Upper lobe of right lung (tissue), 1 donor: ENCODE measurements at regions of chr2 and their contacts with region 1.

Region 1: DNA sequence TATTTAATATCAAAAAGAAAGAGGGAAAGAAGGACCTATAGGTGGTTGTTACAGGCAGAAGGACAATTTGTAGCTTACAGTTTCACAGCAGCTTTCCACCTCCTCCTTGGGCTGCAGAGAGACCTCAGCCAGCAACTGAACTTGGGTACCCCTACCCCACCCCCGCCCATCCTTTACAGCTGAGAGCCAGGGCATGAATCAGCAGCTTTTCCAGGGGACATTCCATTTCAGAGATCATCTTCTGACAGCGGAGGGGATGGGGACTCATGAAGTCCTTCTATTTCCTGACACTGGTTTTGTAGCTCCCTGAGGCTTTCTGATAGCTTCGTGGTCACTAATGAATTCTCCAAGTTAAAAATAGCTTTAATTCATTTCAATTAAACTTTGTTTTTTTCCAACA is 96.4 kb downstream of the ITGB1BP1 start:
- DNase-seq: no peak
- ATAC-seq: no peak
- H3K4me3 ChIP-seq: no peak overlapping the region
- H3K27ac ChIP-seq: no peak overlapping the region
- H3K4me1 ChIP-seq: peaks cover 22% of the 10 kb centered on the region
- H3K27me3 ChIP-seq: no peaks in the 10 kb centered on the region
- CTCF ChIP-seq: no peak

Region 2: GRCh38 chr2:8870441-8870840 is 456.5 kb before region 1 on chr2:
- intact Hi-C with region 1: no loop called
- DNase-seq: no peak
- ATAC-seq: no peak
- H3K4me3 ChIP-seq: no peak overlapping the region
- H3K27ac ChIP-seq: no peak overlapping the region
- H3K4me1 ChIP-seq: no peaks in the 10 kb centered on the region
- H3K27me3 ChIP-seq: no peaks in the 10 kb centered on the region
- CTCF ChIP-seq: no peak

Region 3: GRCh38 chr2:9205963-9206948 is 120.7 kb before region 1 on chr2 and contains the start of gene ASAP2:
- intact Hi-C with region 1: loop called (anchors 10 kb)
- DNase-seq: peak; percentile 90
- ATAC-seq: peak; percentile 85
- H3K4me3 ChIP-seq: peak within 1 kb of the TSS; percentile 77
- H3K27ac ChIP-seq: peak within 1 kb of the TSS; percentile 78
- H3K4me1 ChIP-seq: peaks cover 13% of the 10 kb centered on the region
- H3K27me3 ChIP-seq: peaks cover 6% of the 10 kb centered on the region
- CTCF ChIP-seq: peak; percentile 76
- total RNA-seq, gene ASAP2: 30.9 TPM

Region 4: GRCh38 chr2:9251154-9252001 is 75.6 kb before region 1 on chr2:
- intact Hi-C with region 1: no loop called
- DNase-seq: no peak
- ATAC-seq: peak; percentile 70
- H3K4me3 ChIP-seq: no peak overlapping the region
- H3K27ac ChIP-seq: no peak overlapping the region
- H3K4me1 ChIP-seq: peaks cover 43% of the 10 kb centered on the region
- H3K27me3 ChIP-seq: no peaks in the 10 kb centered on the region
- CTCF ChIP-seq: no peak